Body of pancreas (tissue), 4 donors: ENCODE measurements at regions of chr3 and their contacts with region 1.

Region 1: DNA sequence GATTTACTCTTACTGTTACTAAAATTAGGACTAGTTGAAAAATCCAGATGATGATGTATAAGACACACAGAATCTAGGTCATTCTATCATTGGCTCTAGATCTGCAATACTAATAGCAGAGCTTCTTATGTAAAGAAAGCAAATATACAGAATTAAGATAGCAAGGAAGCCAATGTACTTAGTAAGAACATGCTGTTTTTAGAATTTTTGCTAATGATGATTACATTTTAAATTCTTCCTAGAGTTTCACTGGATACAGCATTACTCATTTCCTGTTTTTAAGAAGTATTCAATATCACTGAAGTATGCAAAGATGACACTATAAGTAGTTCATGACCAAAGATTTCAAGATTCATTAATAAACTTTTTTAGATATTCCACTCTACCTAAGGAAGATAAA is 60.7 kb downstream of the CFAP20DC start:
- DNase-seq: no peak
- ATAC-seq: no peak
- H3K4me3 ChIP-seq: no peak overlapping the region
- H3K27ac ChIP-seq: no peak overlapping the region
- H3K4me1 ChIP-seq: no peaks in the 10 kb centered on the region
- H3K27me3 ChIP-seq: no peaks in the 10 kb centered on the region
- CTCF ChIP-seq: no peak
- POLR2A ChIP-seq: no peak

Region 2: GRCh38 chr3:59820352-59820934 is 831.3 kb after region 1 on chr3:
- intact Hi-C with region 1: loop called (anchors 10 kb)
- DNase-seq: no peak
- ATAC-seq: no peak
- H3K4me3 ChIP-seq: no peak overlapping the region
- H3K27ac ChIP-seq: no peak overlapping the region
- H3K4me1 ChIP-seq: no peaks in the 10 kb centered on the region
- H3K27me3 ChIP-seq: no peaks in the 10 kb centered on the region
- CTCF ChIP-seq: no peak
- POLR2A ChIP-seq: no peak